Endothelial cell of umbilical vein (primary cell): ENCODE measurements at regions of chr3 and their contacts with region 1.

Region 1: DNA sequence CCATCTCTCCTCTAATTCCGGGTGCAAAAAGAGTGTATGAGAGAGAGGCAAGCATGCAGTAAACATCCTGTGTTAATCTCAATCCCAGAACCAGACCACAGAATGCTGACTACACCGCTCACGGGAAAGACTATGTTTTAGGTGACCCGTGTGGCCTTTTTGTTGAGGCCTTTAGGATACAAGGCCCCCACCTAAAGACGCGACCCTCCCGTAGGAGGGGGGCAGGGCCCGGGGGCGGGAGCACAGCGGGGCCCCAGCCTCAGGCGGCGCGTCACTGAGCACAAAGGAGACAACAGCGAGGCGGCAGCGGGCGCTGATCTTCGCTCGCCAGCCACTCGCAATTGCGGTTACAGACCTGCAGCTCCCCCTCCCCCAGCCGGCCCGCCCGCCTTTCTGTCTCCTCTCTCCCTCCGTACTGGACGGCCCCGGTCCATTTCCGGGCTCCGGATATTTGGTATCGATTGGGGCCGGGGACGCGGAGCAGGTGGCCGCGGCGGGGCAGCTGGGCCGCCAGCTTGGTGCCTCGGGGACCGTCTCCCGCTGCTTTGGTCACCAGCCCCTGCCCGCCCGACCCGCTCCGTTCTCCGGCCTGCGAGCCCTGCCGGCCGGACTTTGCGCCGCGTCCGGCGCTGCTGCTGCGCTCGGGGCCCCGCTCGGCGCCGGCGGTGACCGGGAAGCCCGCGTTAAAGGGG is at the start of gene CCDC50:
- DNase-seq: peak; percentile 78
- H3K4me3 ChIP-seq: peak within 1 kb of the TSS; percentile 58 to 96 (median 68)
- H3K27ac ChIP-seq: peak within 1 kb of the TSS; percentile 94
- H3K4me1 ChIP-seq: peaks cover 40% of the 10 kb centered on the region
- H3K27me3 ChIP-seq: no peaks in the 10 kb centered on the region
- CTCF ChIP-seq: no peak
- POLR2A ChIP-seq: peak; percentile 64
- total RNA-seq, gene CCDC50: 137 and 153 TPM in 2 replicates

Region 2: DNA sequence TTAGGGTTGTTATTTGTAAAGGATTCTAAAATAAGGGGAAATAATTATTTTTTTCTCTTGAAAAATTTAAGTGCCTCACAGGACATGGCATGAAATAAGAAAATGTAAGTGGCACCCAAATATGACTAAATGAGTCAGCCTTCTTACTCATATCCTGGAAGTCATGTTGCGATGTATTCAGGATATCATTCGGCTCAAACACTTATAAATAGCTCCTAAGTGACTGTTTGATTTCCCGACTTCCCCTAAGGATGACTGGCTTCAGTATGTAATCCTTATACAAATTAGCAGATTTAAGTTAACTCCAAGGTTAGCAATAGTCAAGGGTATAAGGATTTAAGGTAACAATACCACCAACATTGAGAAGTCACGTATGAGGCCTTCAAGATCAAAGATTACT is 187.4 kb before region 1 on chr3:
- CTCF ChIA-PET with region 1: interaction called, 7 read pairs
- POLR2A ChIA-PET with region 1: no interaction called
- dilution Hi-C with region 1: no loop called
- intact Hi-C with region 1: loop called (anchors 1 kb)
- DNase-seq: peak; percentile 89
- H3K4me3 ChIP-seq: no peak overlapping the region
- H3K27ac ChIP-seq: peak overlapping the region; percentile 50
- H3K4me1 ChIP-seq: peaks cover 25% of the 10 kb centered on the region
- H3K27me3 ChIP-seq: no peaks in the 10 kb centered on the region
- CTCF ChIP-seq: no peak
- POLR2A ChIP-seq: no peak

Region 3: GRCh38 chr3:191244242-191244867 is 84.8 kb before region 1 on chr3:
- CTCF ChIA-PET with region 1: interaction called, 7 read pairs
- POLR2A ChIA-PET with region 1: interaction called, 3 read pairs
- dilution Hi-C with region 1: no loop called
- intact Hi-C with region 1: loop called (anchors 1 kb)
- DNase-seq: peak; percentile 39
- H3K4me3 ChIP-seq: no peak overlapping the region
- H3K27ac ChIP-seq: no peak overlapping the region
- H3K4me1 ChIP-seq: peaks cover 18% of the 10 kb centered on the region
- H3K27me3 ChIP-seq: no peaks in the 10 kb centered on the region
- CTCF ChIP-seq: peak; percentile 15 to 19
- POLR2A ChIP-seq: no peak

Region 4: DNA sequence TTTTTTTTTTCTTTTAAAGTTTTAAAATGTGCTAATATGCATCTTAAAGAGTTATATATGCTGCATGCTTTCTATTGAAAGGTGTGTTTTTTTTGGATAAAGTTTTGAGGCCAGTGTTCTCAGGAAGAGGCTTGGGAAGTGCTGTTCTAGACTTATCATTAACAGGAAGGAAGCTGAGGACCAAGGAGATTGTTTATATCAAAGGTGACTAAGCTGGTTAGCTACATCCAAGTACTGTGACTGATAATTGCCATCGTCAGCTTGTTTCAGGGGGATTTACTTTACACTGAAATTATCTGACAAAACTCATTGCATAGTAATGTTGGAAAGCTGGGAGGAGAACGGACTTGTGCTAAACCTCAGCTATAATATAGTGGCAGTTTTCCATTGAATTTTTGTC is 37.6 kb after region 1 on chr3:
- CTCF ChIA-PET with region 1: interaction called, 3 read pairs
- POLR2A ChIA-PET with region 1: no interaction called
- dilution Hi-C with region 1: no loop called
- intact Hi-C with region 1: loop called (anchors 1 kb)
- DNase-seq: peak; percentile 78
- H3K4me3 ChIP-seq: peak overlapping the region in 1 of 3 experiments; percentile 50
- H3K27ac ChIP-seq: peak overlapping the region; percentile 61
- H3K4me1 ChIP-seq: peaks cover 38% of the 10 kb centered on the region
- H3K27me3 ChIP-seq: no peaks in the 10 kb centered on the region
- CTCF ChIP-seq: no peak
- POLR2A ChIP-seq: peak; percentile 61

Region 5: DNA sequence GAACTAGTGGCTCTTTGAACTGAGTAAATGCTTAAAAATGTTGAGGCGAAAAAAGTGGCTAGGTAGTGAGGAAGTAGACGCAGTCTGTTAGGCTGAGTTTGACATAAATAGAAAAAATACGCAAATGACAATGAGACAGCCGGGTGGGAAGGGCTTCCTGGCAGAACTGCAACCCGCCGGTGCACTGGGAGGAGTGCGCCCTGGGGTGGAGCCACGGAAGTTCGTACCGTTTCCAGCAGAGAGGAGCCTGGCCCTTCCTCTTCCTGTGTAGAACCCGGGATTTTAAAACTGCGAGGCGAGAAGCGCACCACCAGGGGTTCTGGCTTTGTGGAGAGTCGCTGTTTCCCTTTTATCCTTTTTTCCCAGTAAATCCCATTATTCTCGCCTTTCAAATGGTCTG is 734.5 kb after region 1 on chr3:
- CTCF ChIA-PET with region 1: no interaction called
- POLR2A ChIA-PET with region 1: no interaction called
- dilution Hi-C with region 1: no loop called
- intact Hi-C with region 1: loop called (anchors 10 kb)
- DNase-seq: peak; percentile 59
- H3K4me3 ChIP-seq: peak overlapping the region in 2 of 3 experiments; percentile 12 to 41
- H3K27ac ChIP-seq: peak overlapping the region; percentile 64
- H3K4me1 ChIP-seq: peaks cover 14% of the 10 kb centered on the region
- H3K27me3 ChIP-seq: no peaks in the 10 kb centered on the region
- CTCF ChIP-seq: peak in 1 of 2 donors; percentile 1
- POLR2A ChIP-seq: no peak

Region 6: DNA sequence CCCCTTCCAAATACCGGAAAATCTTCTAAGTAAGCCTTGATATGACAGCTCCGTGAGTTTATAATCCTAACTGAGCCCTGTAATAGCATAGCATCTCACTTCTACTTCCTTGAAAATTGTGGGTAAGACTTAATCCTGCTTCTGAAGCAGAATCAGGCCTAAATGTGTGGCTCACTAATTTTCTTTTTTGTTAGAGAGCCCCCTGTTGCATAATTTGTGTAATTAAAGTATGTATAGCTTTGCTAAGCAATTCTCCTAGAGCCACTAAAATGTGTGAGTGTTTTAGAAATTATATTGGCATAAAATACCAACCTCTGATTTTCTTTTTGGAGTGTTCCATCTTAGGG is 1093.9 kb after region 1 on chr3:
- CTCF ChIA-PET with region 1: no interaction called
- POLR2A ChIA-PET with region 1: no interaction called
- dilution Hi-C with region 1: no loop called
- intact Hi-C with region 1: no loop called
- DNase-seq: peak; percentile 50
- H3K4me3 ChIP-seq: no peak overlapping the region
- H3K27ac ChIP-seq: no peak overlapping the region
- H3K4me1 ChIP-seq: peaks cover 8% of the 10 kb centered on the region
- H3K27me3 ChIP-seq: peaks cover 0 to 2% of the 10 kb centered on the region in 2 experiments
- CTCF ChIP-seq: peak in 1 of 2 donors; percentile 10
- POLR2A ChIP-seq: no peak